ENCODE measurements at regions of chr7 and their contacts with region 1.

Region 1: GRCh38 chr7:157347217-157347904 is 10.6 kb downstream of the DNAJB6 start:
- DNase-seq: peak; percentile 92
- H3K4me3 Mint-ChIP-seq: peak overlapping the region; percentile 63
- H3K27ac Mint-ChIP-seq: no peak overlapping the region
- H3K4me1 Mint-ChIP-seq: peaks cover 34% of the 10 kb centered on the region
- H3K27me3 Mint-ChIP-seq: no peaks in the 10 kb centered on the region
- CTCF ChIP-seq: no peak

Region 2: GRCh38 chr7:157273208-157274093 is 73.9 kb before region 1 on chr7:
- CTCF ChIA-PET with region 1: interaction called, 19 read pairs
- POLR2A ChIA-PET with region 1: interaction called, 5 read pairs
- intact Hi-C with region 1: no loop called
- DNase-seq: peak; percentile 67
- H3K4me3 Mint-ChIP-seq: peak overlapping the region; percentile 10
- H3K27ac Mint-ChIP-seq: peak overlapping the region; percentile 86
- H3K4me1 Mint-ChIP-seq: peaks cover 23% of the 10 kb centered on the region
- H3K27me3 Mint-ChIP-seq: no peaks in the 10 kb centered on the region
- CTCF ChIP-seq: peak; percentile 95

Region 3: GRCh38 chr7:157357129-157358040 is 10.0 kb after region 1 on chr7:
- CTCF ChIA-PET with region 1: interaction called, 5 read pairs
- POLR2A ChIA-PET with region 1: interaction called, 16 read pairs
- intact Hi-C with region 1: no loop called
- DNase-seq: no peak
- H3K4me3 Mint-ChIP-seq: no peak overlapping the region
- H3K27ac Mint-ChIP-seq: peak overlapping the region; percentile 61
- H3K4me1 Mint-ChIP-seq: peaks cover 48% of the 10 kb centered on the region
- H3K27me3 Mint-ChIP-seq: no peaks in the 10 kb centered on the region
- CTCF ChIP-seq: no peak

Region 4: DNA sequence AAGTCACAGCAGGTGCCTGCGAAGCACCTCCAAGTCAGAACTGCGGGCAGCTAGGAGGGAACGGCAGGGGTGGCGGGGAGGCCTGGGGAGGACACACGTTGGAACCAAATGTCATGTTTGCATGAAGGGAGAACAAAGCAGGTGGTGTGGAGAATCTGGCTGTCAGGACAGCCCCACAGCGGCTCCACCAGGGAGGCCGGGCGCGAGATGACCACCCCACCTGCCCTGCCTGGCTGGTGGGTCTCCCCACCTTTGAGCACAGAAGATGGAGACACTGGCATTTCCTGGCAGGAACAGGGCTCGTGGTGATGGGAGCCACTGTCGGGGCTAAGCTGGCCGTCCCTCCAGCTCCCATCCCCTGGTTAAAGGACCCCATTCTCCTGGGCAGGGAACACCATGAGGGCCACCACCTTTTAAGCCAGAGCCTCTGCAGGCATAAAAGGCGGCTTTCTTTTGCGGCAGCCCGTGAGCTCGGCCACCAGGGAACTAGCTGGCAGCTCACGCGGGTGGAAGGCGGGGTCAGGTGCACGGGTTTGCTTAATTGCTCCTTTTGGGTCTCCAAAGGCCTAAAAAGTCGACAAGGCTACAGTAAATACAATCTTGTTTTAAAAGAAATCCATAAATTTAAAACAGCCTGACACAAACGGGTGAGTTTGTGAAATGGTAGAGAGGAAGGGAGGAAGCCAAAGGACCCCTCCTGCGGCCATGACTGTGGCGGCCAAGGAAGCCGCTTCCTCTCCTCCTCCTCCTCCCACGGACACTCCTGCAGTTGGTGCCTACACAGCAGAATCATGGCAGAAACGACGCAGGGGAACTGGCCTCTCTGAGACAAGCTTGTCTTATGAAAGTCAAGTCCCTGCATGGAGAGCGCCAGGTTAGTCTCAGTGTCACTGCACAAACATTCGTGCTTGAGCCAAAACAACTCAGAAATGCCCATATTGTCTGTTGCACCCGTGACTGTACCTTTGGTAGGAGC is 203.2 kb after region 1 on chr7:
- CTCF ChIA-PET with region 1: no interaction called
- POLR2A ChIA-PET with region 1: no interaction called
- intact Hi-C with region 1: no loop called
- DNase-seq: no peak
- H3K4me3 Mint-ChIP-seq: no peak overlapping the region
- H3K27ac Mint-ChIP-seq: no peak overlapping the region
- H3K4me1 Mint-ChIP-seq: no peaks in the 10 kb centered on the region
- H3K27me3 Mint-ChIP-seq: no peaks in the 10 kb centered on the region
- CTCF ChIP-seq: no peak